Activated CD4-positive, alpha-beta T cell treated with anti-CD3 and anti-CD28 coated beads for 36 hours (primary cell): ENCODE measurements at regions of chr15 and their contacts with region 1.

Region 1: DNA sequence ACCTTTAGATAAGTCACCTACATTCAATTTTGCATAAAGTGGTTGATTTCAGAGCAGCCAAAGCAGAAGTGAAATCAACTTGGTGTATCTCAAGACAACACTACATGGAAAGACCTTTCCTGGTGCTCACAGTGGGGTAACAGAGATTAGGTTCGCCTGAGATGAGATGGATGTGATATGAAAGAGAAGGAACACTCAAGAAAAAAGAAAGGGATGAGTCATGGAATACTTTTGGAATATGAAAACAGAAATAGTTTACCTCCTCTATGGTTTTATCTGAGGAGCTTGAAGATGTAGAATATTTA is 53.4 kb upstream of the AP4E1 start:
- DNase-seq: no peak
- ATAC-seq: no peak
- H3K4me3 Mint-ChIP-seq: no peak overlapping the region
- H3K27ac Mint-ChIP-seq: no peak overlapping the region
- H3K4me1 Mint-ChIP-seq: no peaks in the 10 kb centered on the region
- H3K27me3 Mint-ChIP-seq: peaks cover 2% of the 10 kb centered on the region

Region 2: DNA sequence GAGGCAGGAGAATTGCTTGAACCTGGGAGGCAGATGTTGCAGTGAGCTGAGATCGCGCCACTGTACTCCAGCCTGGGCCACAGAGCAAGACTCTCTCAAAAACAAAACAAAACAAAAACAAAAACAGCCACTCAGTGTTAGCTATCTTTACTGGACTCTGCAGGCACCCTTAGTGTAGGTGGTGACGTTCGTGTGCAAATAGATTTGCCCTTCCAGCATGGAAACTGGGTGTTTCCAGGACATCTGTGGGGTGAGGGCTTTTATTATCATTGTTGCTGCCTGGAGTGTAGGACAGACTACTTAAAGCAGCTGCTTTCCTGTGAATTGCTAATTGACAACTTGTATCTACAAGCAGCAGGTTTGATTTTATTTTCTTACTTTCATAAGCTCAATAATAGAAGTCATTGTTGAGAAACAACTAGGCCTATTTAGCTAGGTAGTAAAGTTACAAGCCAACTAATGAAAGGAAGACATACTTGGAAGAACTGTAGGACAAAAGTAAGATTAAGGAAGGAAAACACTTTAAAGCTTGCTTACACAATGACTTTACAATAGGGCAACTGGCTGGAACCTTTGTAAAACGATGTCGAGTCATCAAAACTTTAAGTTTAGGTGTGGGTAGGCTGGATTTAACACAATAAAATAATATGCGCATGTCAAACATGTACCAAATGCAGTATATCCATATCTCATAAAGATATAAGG is 64.1 kb before region 1 on chr15:
- CTCF ChIA-PET with region 1: no interaction called
- POLR2A ChIA-PET with region 1: no interaction called
- intact Hi-C with region 1: loop called in 1 of 2 experiments (anchors 5 kb)
- DNase-seq: no peak
- ATAC-seq: no peak
- H3K4me3 Mint-ChIP-seq: no peak overlapping the region
- H3K27ac Mint-ChIP-seq: no peak overlapping the region
- H3K4me1 Mint-ChIP-seq: no peaks in the 10 kb centered on the region
- H3K27me3 Mint-ChIP-seq: no peaks in the 10 kb centered on the region